ENCODE measurements at regions of chr2 and their contacts with region 1.

Region 1: GRCh38 chr2:15584767-15585469 is 6.8 kb upstream of the DDX1 start:
- DNase-seq: no peak
- H3K4me3 ChIP-seq: no peak overlapping the region
- H3K27ac ChIP-seq: no peak overlapping the region
- H3K27me3 ChIP-seq: no peaks in the 10 kb centered on the region
- CTCF ChIP-seq: no peak

Region 2: DNA sequence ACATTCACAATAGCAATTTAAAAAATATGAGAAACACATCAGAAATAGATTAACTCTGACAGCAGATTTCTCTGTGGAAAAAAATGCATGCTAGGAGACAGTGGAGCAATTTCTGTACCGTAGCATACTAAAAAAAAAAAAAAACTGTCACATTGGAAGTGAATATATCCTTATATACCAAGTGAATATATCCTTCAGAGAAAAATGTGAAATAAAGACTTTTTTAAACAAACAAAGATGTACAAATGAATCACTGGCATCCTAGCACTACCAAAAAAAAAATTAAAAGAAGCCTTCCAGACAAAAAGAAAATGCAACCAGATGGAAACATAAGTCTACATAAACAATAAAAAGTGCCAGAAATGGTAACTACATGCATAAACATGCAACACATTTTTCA is 193.2 kb before region 1 on chr2:
- intact Hi-C with region 1: no loop called
- DNase-seq: no peak
- H3K4me3 ChIP-seq: no peak overlapping the region
- H3K27ac ChIP-seq: no peak overlapping the region
- H3K27me3 ChIP-seq: no peaks in the 10 kb centered on the region
- CTCF ChIP-seq: no peak

Region 3: GRCh38 chr2:15568874-15569273 is 16.0 kb before region 1 on chr2:
- intact Hi-C with region 1: loop called in 1 of 2 experiments (anchors 1 kb)
- DNase-seq: no peak
- H3K4me3 ChIP-seq: no peak overlapping the region
- H3K27ac ChIP-seq: no peak overlapping the region
- H3K27me3 ChIP-seq: no peaks in the 10 kb centered on the region
- CTCF ChIP-seq: no peak

Region 4: GRCh38 chr2:15665067-15665942 is 80.4 kb after region 1 on chr2:
- intact Hi-C with region 1: no loop called
- DNase-seq: no peak
- H3K4me3 ChIP-seq: no peak overlapping the region
- H3K27ac ChIP-seq: no peak overlapping the region
- H3K27me3 ChIP-seq: no peaks in the 10 kb centered on the region
- CTCF ChIP-seq: no peak

Measured in dorsolateral prefrontal cortex (tissue), 120 donors.